Vagina (tissue), 2 donors: ENCODE measurements at regions of chr3 and their contacts with region 1.

Region 1: GRCh38 chr3:63980835-63981498 is 42.3 kb downstream of the PSMD6 start:
- DNase-seq: no peak
- H3K4me3 ChIP-seq: no peak overlapping the region
- H3K27ac ChIP-seq: no peak overlapping the region
- H3K4me1 ChIP-seq: peaks cover 41% of the 10 kb centered on the region
- H3K27me3 ChIP-seq: no peaks in the 10 kb centered on the region
- CTCF ChIP-seq: no peak
- POLR2A ChIP-seq: no peak

Region 2: DNA sequence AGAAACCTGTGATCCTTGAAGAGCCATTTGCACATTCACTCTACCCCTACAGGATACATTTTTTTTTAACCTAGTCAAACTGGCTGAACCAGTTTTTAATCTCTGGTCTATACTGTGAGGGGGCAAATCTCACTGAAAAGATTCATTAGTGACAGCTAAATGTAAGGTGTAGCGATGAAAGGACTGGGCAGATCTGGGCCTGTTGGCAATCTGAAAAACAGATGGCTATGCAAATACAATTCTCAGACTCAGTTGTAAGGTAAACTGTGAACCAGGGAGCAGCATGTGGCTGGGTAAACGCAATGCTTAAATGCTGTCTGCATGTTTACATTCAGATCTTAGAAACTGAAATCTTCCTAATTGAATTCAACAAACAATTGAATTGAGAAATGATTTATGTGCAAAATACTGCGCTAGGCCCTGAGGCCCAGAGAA is 404.0 kb before region 1 on chr3:
- intact Hi-C with region 1: no loop called
- DNase-seq: no peak
- H3K4me3 ChIP-seq: no peak overlapping the region
- H3K27ac ChIP-seq: no peak overlapping the region
- H3K4me1 ChIP-seq: no peaks in the 10 kb centered on the region
- H3K27me3 ChIP-seq: no peaks in the 10 kb centered on the region
- CTCF ChIP-seq: no peak
- POLR2A ChIP-seq: no peak

Region 3: DNA sequence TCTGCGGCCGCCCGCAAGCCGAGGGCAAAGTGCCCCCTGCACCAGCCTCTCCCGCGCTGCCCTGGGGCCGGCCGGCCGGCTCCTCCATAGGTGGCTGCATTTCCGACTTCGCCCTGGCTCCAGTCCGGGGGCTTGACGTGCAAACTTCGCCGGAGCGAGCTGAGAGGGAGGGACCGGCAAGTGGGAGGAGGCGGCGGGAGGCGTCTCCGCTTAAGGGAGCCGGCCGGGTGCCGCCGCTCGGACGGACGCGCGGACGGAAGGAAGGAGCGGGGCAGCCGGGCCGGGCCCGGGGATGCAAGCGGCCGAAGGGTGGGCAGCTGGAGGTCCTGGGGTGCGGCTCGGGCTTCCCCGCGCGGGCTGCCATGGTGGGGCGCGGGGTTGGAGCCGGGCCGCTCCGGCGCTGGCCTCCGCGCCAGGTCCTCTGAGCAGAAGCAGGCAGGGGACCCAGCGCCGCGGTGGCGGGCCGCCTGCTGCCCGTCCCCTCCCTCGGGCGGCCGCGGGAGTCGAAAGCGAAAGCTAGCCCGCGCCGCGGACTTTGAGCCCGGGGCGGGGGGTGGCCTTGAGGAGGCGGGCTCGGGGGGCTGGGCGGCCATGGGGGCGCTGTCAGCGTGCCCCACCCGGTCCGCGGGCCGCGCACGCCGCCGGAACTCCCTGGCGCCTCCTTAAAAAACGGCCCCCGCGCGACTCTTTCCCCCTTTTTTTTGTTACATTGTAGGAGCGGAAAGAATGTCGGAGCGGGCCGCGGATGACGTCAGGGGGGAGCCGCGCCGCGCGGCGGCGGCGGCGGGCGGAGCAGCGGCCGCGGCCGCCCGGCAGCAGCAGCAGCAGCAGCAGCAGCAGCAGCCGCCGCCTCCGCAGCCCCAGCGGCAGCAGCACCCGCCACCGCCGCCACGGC is 68.8 kb before region 1 on chr3 and contains the start of gene SCAANT1:
- intact Hi-C with region 1: loop called (anchors 10 kb)
- DNase-seq: peak in 1 of 2 donors; percentile 93
- H3K4me3 ChIP-seq: peak within 1 kb of the TSS; percentile 68 to 92
- H3K27ac ChIP-seq: peak within 1 kb of the TSS; percentile 95
- H3K4me1 ChIP-seq: peaks cover 26% of the 10 kb centered on the region
- H3K27me3 ChIP-seq: no peaks in the 10 kb centered on the region
- CTCF ChIP-seq: peak in 1 of 3 experiments; percentile 14
- POLR2A ChIP-seq: peak in 1 of 2 donors; percentile 47
- total RNA-seq, gene SCAANT1: not detected